Aorta (tissue), 5 donors: ENCODE measurements at regions of chr15 and their contacts with region 1.

Region 1: GRCh38 chr15:50675536-50676144 is 11.0 kb downstream of the TRPM7 start:
- DNase-seq: no peak
- ATAC-seq: no peak
- H3K4me3 ChIP-seq: no peak overlapping the region
- H3K27ac ChIP-seq: no peak overlapping the region
- H3K4me1 ChIP-seq: no peaks in the 10 kb centered on the region
- H3K27me3 ChIP-seq: no peaks in the 10 kb centered on the region

Region 2: GRCh38 chr15:50726315-50726714 is 50.7 kb after region 1 on chr15:
- intact Hi-C with region 1: no loop called
- DNase-seq: no peak
- ATAC-seq: no peak
- H3K4me3 ChIP-seq: no peak overlapping the region
- H3K27ac ChIP-seq: no peak overlapping the region
- H3K4me1 ChIP-seq: no peaks in the 10 kb centered on the region
- H3K27me3 ChIP-seq: no peaks in the 10 kb centered on the region

Region 3: GRCh38 chr15:50876989-50877360 is 201.3 kb after region 1 on chr15:
- intact Hi-C with region 1: loop called (anchors 2 to 5 kb)
- DNase-seq: peak in 1 of 2 donors; percentile 71
- ATAC-seq: peak; percentile 90
- H3K4me3 ChIP-seq: peak overlapping the region; percentile 51 to 53
- H3K27ac ChIP-seq: no peak overlapping the region
- H3K4me1 ChIP-seq: no peaks in the 10 kb centered on the region
- H3K27me3 ChIP-seq: no peaks in the 10 kb centered on the region

Region 4: GRCh38 chr15:50886140-50886467 is 210.5 kb after region 1 on chr15:
- intact Hi-C with region 1: loop called in 1 of 2 experiments (anchors 5 kb)
- DNase-seq: no peak
- ATAC-seq: no peak
- H3K4me3 ChIP-seq: no peak overlapping the region
- H3K27ac ChIP-seq: no peak overlapping the region
- H3K4me1 ChIP-seq: peaks cover 0 to 3% of the 10 kb centered on the region in 2 donors
- H3K27me3 ChIP-seq: no peaks in the 10 kb centered on the region

Region 5: GRCh38 chr15:50908210-50909009 is 232.8 kb after region 1 on chr15 and contains the start of gene AP4E1:
- intact Hi-C with region 1: loop called (anchors 1 to 2 kb)
- DNase-seq: peak; percentile 94 to 97
- ATAC-seq: peak; percentile 97
- H3K4me3 ChIP-seq: peak within 1 kb of the TSS; percentile 87 to 91
- H3K27ac ChIP-seq: peak within 1 kb of the TSS; percentile 51 to 62
- H3K4me1 ChIP-seq: no peaks in the 10 kb centered on the region
- H3K27me3 ChIP-seq: no peaks in the 10 kb centered on the region
- total RNA-seq, gene AP4E1: 10.4 to 12.6 TPM